GM12878 (cell line): ENCODE measurements at regions of chr3 and their contacts with region 1.

Region 1: DNA sequence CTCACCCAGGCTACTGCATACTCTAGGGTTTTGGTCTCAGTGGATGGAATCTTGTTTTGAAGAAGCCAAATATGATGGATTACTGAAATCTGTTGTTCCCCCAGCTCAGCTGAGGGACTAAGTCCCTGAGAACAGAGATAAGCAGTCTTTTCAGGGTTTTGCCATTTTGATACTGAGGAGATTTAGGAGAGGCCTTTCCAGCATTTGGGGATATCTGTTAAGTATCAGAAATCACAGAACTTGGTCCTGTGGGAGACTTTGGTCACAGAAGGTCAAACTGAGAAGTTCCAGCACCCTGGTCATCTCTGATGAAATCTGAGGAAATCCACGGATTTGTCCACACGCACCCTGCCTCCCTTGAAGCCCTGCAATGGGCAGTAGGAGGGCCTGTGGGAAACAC is 181.0 kb upstream of the GADL1 start:
- DNase-seq: no peak
- ATAC-seq: no peak
- H3K4me3 ChIP-seq: no peak overlapping the region
- H3K27ac ChIP-seq: no peak overlapping the region
- H3K4me1 ChIP-seq: no peaks in the 10 kb centered on the region
- H3K27me3 ChIP-seq: no peaks in the 10 kb centered on the region
- CTCF ChIP-seq: no peak
- EP300 ChIP-seq: no peak
- POLR2A ChIP-seq: no peak
- RAD21 ChIP-seq: no peak

Region 2: GRCh38 chr3:31086698-31087097 is 11.2 kb after region 1 on chr3:
- CTCF ChIA-PET with region 1: interaction called, 10 read pairs
- POLR2A ChIA-PET with region 1: no interaction called
- RAD21 ChIA-PET with region 1: no interaction called
- SMC1A ChIA-PET with region 1: interaction called, 7 read pairs
- in situ Hi-C with region 1: no loop called
- intact Hi-C with region 1: no loop called
- DNase-seq: no peak
- ATAC-seq: no peak
- H3K4me3 ChIP-seq: no peak overlapping the region
- H3K27ac ChIP-seq: no peak overlapping the region
- H3K4me1 ChIP-seq: no peaks in the 10 kb centered on the region
- H3K27me3 ChIP-seq: no peaks in the 10 kb centered on the region
- CTCF ChIP-seq: no peak
- EP300 ChIP-seq: no peak
- POLR2A ChIP-seq: no peak
- RAD21 ChIP-seq: no peak

Region 3: DNA sequence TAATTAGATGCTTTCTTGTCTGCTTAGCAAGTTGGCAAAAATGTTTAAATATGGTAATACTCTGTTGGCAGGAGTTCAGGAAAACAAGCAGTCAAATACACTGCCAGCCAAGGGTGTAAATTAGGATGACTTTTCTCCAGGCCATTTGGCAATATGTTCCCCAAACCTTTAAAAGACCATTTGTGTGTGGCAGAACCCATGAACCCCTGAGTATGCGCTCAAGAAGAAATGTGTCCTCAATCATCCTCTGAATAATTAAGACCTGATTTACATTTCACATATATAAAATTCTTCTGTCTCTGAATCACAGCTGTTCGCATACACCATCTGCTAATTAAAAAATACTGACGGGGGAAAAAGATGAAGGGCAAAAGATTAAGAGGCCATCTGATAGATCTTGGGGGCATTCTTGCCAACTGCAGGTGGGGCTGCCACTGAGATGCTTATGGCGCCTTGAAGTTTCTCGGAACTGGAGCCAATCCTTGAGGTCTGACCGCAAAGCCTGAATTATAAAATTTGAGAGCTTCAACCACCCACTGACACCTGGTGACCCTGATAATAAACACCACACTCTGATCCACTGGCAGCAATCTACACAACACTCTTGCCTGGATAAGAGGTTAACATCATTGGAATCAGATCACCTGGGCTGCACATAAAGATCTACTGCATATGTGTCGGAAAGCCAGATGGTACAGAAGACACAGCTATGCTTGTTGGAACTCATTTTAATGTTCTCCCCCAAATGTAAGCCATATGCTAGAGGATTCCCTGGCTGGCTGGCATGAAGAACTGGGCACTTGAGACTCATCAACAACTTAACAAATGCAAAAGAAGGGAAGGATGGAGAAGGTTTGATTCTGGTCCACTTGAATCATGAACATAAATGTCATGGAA is 715.0 kb after region 1 on chr3:
- CTCF ChIA-PET with region 1: no interaction called
- POLR2A ChIA-PET with region 1: no interaction called
- RAD21 ChIA-PET with region 1: no interaction called
- SMC1A ChIA-PET with region 1: no interaction called
- in situ Hi-C with region 1: no loop called
- intact Hi-C with region 1: no loop called
- DNase-seq: no peak
- ATAC-seq: no peak
- H3K4me3 ChIP-seq: no peak overlapping the region
- H3K27ac ChIP-seq: no peak overlapping the region
- H3K4me1 ChIP-seq: no peaks in the 10 kb centered on the region
- H3K27me3 ChIP-seq: no peaks in the 10 kb centered on the region
- CTCF ChIP-seq: no peak
- EP300 ChIP-seq: no peak
- POLR2A ChIP-seq: no peak
- RAD21 ChIP-seq: no peak